ENCODE measurements at regions of chr4 and their contacts with region 1.

Region 1: GRCh38 chr4:183074296-183074990 is 24.6 kb upstream of the WWC2 start:
- DNase-seq: no peak
- ATAC-seq: no peak
- H3K4me3 ChIP-seq: no peak overlapping the region
- H3K27ac ChIP-seq: no peak overlapping the region
- H3K4me1 ChIP-seq: no peaks in the 10 kb centered on the region
- H3K27me3 ChIP-seq: no peaks in the 10 kb centered on the region
- CTCF ChIP-seq: no peak
- POLR2A ChIP-seq: no peak
- RAD21 ChIP-seq: no peak

Region 2: DNA sequence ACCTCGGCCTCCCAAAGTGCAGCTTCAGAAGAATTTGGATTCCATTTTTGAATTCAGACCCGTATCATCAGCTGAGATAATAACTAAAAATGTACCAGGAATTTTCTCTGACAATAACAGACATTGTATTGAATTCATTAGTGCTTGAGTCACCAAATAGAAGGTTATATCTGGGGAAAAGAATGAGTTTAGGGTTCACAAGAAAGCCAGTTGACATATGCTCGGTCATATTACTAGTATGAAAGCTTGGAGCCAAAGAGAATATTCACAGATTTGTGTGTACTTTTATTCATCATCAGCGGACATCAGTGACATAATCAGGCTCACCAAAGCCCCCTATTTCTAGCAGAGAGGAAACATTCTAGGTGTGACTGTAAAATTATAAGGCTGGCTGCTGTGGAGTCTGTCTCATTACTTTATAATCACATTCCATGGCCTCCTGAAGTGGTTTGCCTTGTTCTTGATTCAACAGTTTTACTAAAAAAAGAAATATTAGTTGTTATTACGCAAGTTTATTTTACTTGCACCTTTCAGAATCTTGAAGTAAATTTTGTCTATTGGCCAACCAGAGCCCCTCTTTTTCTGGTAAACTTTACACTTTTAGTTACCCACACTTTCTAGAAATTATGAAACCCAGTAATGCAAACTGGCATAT is 142.6 kb before region 1 on chr4:
- CTCF ChIA-PET with region 1: no interaction called
- POLR2A ChIA-PET with region 1: no interaction called
- RAD21 ChIA-PET with region 1: no interaction called
- intact Hi-C with region 1: no loop called
- DNase-seq: no peak
- ATAC-seq: no peak
- H3K4me3 ChIP-seq: no peak overlapping the region
- H3K27ac ChIP-seq: no peak overlapping the region
- H3K4me1 ChIP-seq: no peaks in the 10 kb centered on the region
- H3K27me3 ChIP-seq: 0 out of 2 replicates have a peak, but pooled peaks cover 3% of the 10 kb centered on the region
- CTCF ChIP-seq: no peak
- POLR2A ChIP-seq: no peak
- RAD21 ChIP-seq: no peak

Region 3: DNA sequence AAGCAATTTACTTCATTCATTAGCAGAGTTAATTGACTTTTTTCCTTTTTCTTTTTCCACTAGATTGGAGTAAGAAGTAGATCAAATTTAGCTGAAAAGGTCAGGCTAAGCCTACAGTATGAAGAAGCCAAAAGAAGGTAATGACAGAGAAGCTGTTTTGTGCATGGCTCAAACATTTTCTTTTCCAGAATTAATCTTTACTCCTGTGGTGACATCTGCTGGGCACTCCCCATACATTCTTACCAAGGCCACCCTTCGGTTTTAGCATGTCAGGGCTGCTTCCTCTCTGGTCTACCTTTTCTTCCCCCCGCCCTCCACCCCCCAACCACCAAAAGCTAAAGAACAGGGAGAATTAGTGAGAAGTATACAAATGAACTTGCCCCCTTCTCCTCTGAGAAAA is 175.4 kb after region 1 on chr4:
- CTCF ChIA-PET with region 1: interaction called, 49 read pairs
- POLR2A ChIA-PET with region 1: no interaction called
- RAD21 ChIA-PET with region 1: interaction called, 5 to 7 read pairs
- intact Hi-C with region 1: loop called (anchors 1 kb)
- DNase-seq: no peak
- ATAC-seq: peak; percentile 76
- H3K4me3 ChIP-seq: no peak overlapping the region
- H3K27ac ChIP-seq: no peak overlapping the region
- H3K4me1 ChIP-seq: no peaks in the 10 kb centered on the region
- H3K27me3 ChIP-seq: no peaks in the 10 kb centered on the region
- CTCF ChIP-seq: peak; percentile 24 to 62 (median 53); a peak in 4 of 6 replicates
- POLR2A ChIP-seq: no peak
- RAD21 ChIP-seq: peak; percentile 75

Region 4: GRCh38 chr4:183256756-183257385 is 182.4 kb after region 1 on chr4:
- CTCF ChIA-PET with region 1: interaction called, 49 read pairs
- POLR2A ChIA-PET with region 1: no interaction called
- RAD21 ChIA-PET with region 1: interaction called, 8 to 12 read pairs
- intact Hi-C with region 1: loop called (anchors 1 kb)
- DNase-seq: peak; percentile 33
- ATAC-seq: peak; percentile 94
- H3K4me3 ChIP-seq: no peak overlapping the region
- H3K27ac ChIP-seq: no peak overlapping the region
- H3K4me1 ChIP-seq: no peaks in the 10 kb centered on the region
- H3K27me3 ChIP-seq: no peaks in the 10 kb centered on the region
- CTCF ChIP-seq: peak; percentile 83 to 94 (median 87)
- POLR2A ChIP-seq: no peak
- RAD21 ChIP-seq: peak; percentile 74

Measured in HCT116 (cell line).